ENCODE measurements at regions of chr6 and their contacts with region 1.

Region 1: DNA sequence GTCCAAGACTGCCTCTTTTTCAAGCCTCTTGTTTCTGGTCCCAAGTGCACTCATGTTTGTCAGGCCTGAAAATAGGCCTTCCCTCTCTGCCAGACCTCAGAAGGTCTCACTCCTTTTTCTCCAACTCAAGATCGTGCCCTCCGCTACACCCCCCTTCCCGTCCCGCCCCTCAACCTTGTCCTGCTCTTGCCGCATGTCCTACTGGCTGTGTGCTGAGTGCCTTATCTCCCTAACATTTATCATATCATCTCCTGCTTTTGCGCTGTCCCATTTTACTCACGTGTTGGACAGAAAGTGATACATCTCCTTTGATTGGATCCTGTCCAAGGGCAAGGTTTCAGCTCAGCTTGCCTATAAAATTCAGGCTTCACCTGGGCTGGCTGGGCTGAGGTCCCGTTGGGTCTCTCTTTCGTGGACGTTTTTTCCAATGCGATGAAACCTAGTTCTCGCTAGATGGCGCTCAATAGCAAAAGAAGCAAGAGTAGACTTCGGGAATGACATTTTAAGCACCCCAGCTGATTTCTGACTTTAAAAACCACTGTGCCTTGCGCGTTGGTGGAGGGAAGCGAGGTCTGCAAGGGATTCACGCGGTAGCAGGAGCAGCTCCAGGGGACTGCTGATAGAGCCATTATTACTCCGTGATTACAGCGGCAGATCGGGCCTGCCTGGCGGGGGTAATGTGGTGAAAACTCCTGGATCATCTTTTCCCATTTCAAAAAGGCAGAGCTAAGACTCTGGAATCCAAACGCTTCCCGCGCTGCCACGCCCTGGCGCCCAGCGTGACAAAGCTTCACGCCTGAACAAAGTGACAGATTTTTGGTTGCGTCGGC is 137.6 kb downstream of the IMPG1 start:
- DNase-seq: peak in 1 of 2 experiments; percentile 34
- H3K4me3 ChIP-seq: no peak overlapping the region
- H3K27ac ChIP-seq: no peak overlapping the region
- H3K4me1 ChIP-seq: no peaks in the 10 kb centered on the region
- H3K27me3 ChIP-seq: no peaks in the 10 kb centered on the region
- CTCF ChIP-seq: peak; percentile 84

Region 2: GRCh38 chr6:75874224-75874623 is 60.6 kb before region 1 on chr6:
- CTCF ChIA-PET with region 1: no interaction called
- POLR2A ChIA-PET with region 1: no interaction called
- intact Hi-C with region 1: no loop called
- DNase-seq: no peak
- H3K4me3 ChIP-seq: no peak overlapping the region
- H3K27ac ChIP-seq: no peak overlapping the region
- H3K4me1 ChIP-seq: no peaks in the 10 kb centered on the region
- H3K27me3 ChIP-seq: no peaks in the 10 kb centered on the region
- CTCF ChIP-seq: no peak

Region 3: GRCh38 chr6:75922226-75922625 is 12.6 kb before region 1 on chr6:
- CTCF ChIA-PET with region 1: no interaction called
- POLR2A ChIA-PET with region 1: no interaction called
- intact Hi-C with region 1: no loop called
- DNase-seq: no peak
- H3K4me3 ChIP-seq: no peak overlapping the region
- H3K27ac ChIP-seq: no peak overlapping the region
- H3K4me1 ChIP-seq: no peaks in the 10 kb centered on the region
- H3K27me3 ChIP-seq: no peaks in the 10 kb centered on the region
- CTCF ChIP-seq: no peak

Region 4: GRCh38 chr6:76342611-76343160 is 407.8 kb after region 1 on chr6:
- CTCF ChIA-PET with region 1: no interaction called
- POLR2A ChIA-PET with region 1: no interaction called
- intact Hi-C with region 1: loop called (anchors 10 kb)
- DNase-seq: no peak
- H3K4me3 ChIP-seq: no peak overlapping the region
- H3K27ac ChIP-seq: no peak overlapping the region
- H3K4me1 ChIP-seq: no peaks in the 10 kb centered on the region
- H3K27me3 ChIP-seq: no peaks in the 10 kb centered on the region
- CTCF ChIP-seq: no peak

Region 5: DNA sequence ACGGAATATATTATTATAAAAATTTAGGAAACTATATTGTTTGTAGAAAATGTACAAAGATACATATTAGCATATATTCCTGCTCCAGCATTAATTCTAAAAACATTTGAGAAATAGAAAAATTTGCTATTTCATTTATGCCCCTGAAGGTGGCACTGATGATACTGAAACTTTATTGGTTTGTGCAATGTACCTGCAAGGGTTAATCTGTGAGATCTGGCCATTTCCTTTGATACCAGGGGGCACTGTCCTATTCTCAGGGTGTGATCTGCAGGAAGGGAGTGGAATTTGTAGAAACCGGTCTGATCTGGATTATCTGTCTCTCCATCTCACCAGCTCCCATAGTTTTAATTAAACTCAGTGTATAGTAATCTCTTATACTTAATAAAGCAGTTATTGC is 762.7 kb after region 1 on chr6:
- CTCF ChIA-PET with region 1: no interaction called
- POLR2A ChIA-PET with region 1: no interaction called
- intact Hi-C with region 1: loop called (anchors 10 kb)
- DNase-seq: peak in 1 of 2 experiments; percentile 2
- H3K4me3 ChIP-seq: no peak overlapping the region
- H3K27ac ChIP-seq: no peak overlapping the region
- H3K4me1 ChIP-seq: no peaks in the 10 kb centered on the region
- H3K27me3 ChIP-seq: no peaks in the 10 kb centered on the region
- CTCF ChIP-seq: no peak

Region 6: GRCh38 chr6:76861403-76861802 is 926.5 kb after region 1 on chr6:
- CTCF ChIA-PET with region 1: no interaction called
- POLR2A ChIA-PET with region 1: no interaction called
- intact Hi-C with region 1: loop called (anchors 10 kb)
- DNase-seq: no peak
- H3K4me3 ChIP-seq: no peak overlapping the region
- H3K27ac ChIP-seq: no peak overlapping the region
- H3K4me1 ChIP-seq: no peaks in the 10 kb centered on the region
- H3K27me3 ChIP-seq: no peaks in the 10 kb centered on the region
- CTCF ChIP-seq: peak; percentile 34

Measured in PC-9 (cell line).